ENCODE measurements at regions of chr6 and their contacts with region 1.

Region 1: GRCh38 chr6:166999145-166999883 is at the start of gene CEP43:
- DNase-seq: peak; percentile 91
- H3K4me3 Mint-ChIP-seq: peak within 1 kb of the TSS; percentile 89
- H3K27ac Mint-ChIP-seq: peak within 1 kb of the TSS; percentile 82
- H3K4me1 Mint-ChIP-seq: peaks cover 42% of the 10 kb centered on the region
- H3K27me3 Mint-ChIP-seq: no peaks in the 10 kb centered on the region
- total RNA-seq, gene CEP43: 21.5 to 22.8 TPM

Region 2: DNA sequence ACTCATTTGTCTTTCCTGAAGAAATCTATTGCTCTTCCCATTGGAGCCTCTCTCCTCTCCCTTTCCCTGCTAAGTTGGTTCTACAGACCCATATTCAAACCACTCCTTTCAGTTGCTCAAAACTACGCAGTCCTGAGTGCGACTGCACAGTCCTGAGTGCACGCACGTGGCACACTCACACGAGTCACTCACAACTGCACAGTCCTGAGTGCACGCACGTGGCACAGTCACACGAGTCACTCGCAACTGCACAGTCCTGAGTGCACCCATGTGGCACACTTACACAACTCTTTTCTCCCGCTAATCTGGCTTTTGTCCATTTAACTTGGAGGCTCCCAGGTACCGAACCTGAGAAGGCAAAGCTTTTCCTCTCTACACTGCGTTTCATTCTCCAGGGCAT is 202.7 kb before region 1 on chr6:
- CTCF ChIA-PET with region 1: no interaction called
- POLR2A ChIA-PET with region 1: no interaction called
- DNase-seq: no peak
- H3K4me3 Mint-ChIP-seq: no peak overlapping the region
- H3K27ac Mint-ChIP-seq: no peak overlapping the region
- H3K4me1 Mint-ChIP-seq: no peaks in the 10 kb centered on the region
- H3K27me3 Mint-ChIP-seq: peaks cover 7% of the 10 kb centered on the region

Region 3: DNA sequence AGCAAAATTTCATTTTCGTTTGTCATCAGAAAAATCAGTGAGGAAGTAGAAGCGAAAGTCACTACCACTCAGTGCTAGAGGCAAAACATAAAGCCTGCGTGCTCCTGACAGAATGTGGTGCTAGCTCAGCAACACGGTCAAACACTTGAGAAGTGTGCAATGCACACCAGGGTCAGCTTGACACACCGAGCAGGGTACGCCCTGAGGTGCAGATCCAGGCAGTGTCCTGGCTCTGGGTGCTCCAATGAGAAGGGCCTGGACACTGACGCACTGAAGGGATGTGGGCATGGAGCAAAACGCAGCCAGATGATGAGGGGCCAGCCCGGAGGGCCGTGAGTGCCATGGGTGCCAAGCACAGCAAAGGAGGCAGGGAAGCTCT is 48.9 kb before region 1 on chr6:
- CTCF ChIA-PET with region 1: interaction called, 4 read pairs
- POLR2A ChIA-PET with region 1: interaction called, 35 read pairs
- DNase-seq: peak; percentile 51
- H3K4me3 Mint-ChIP-seq: peak overlapping the region; percentile 67
- H3K27ac Mint-ChIP-seq: peak overlapping the region; percentile 100
- H3K4me1 Mint-ChIP-seq: peaks cover 61% of the 10 kb centered on the region
- H3K27me3 Mint-ChIP-seq: no peaks in the 10 kb centered on the region

Region 4: GRCh38 chr6:166956444-166957086 is 42.7 kb before region 1 on chr6 and contains the start of gene RNASET2:
- CTCF ChIA-PET with region 1: interaction called, 6 read pairs
- POLR2A ChIA-PET with region 1: interaction called, 35 read pairs
- DNase-seq: peak; percentile 99
- H3K4me3 Mint-ChIP-seq: peak within 1 kb of the TSS; percentile 91
- H3K27ac Mint-ChIP-seq: peak within 1 kb of the TSS; percentile 99
- H3K4me1 Mint-ChIP-seq: peaks cover 73% of the 10 kb centered on the region
- H3K27me3 Mint-ChIP-seq: no peaks in the 10 kb centered on the region
- total RNA-seq, gene RNASET2: 107 to 112 TPM

Region 5: DNA sequence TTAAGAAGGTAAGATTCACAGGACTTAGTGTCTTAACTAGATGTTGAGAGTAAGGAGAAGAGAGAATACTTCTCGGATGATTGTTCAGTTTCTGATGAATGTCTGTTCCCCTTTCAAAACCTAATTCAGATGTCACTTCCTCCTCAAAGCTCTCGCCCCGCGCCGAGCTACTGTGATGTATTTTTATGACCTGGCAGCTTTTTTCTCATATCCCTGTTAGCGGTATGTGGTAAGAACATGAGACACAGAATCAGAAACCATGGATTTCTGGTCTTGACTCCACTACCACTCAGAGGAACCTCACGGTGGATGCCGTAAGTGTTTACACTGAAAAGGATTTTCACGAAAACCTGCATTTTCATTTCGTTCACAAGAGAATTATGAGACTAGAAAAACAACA is 48.2 kb after region 1 on chr6:
- CTCF ChIA-PET with region 1: interaction called, 6 read pairs
- POLR2A ChIA-PET with region 1: interaction called, 14 read pairs
- DNase-seq: peak; percentile 70
- H3K4me3 Mint-ChIP-seq: peak overlapping the region; percentile 34
- H3K27ac Mint-ChIP-seq: peak overlapping the region; percentile 63
- H3K4me1 Mint-ChIP-seq: peaks cover 35% of the 10 kb centered on the region
- H3K27me3 Mint-ChIP-seq: no peaks in the 10 kb centered on the region

Region 6: DNA sequence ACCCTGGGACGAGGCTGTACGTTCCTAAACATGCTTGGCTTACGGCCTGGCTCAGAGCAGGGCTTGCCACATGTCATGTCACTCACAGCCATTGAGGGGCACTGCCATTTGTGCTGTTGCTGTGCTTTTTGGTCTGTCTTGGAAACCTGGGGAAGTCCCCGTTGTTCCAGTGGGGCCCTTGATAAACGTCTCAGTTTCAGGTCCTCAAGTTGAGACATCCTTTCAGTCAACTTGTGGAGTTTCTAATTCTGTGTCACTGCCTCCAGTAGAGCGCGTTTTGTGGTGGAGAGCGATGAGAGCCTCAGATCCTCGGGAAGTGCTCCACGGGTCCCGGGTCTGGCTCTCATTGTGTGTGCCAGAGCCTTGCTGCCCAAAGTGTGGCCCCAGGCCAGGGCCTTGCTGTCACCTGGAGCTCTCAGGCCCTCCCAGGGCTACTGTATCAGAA is 80.6 kb after region 1 on chr6:
- CTCF ChIA-PET with region 1: no interaction called
- POLR2A ChIA-PET with region 1: no interaction called
- DNase-seq: peak; percentile 58
- H3K4me3 Mint-ChIP-seq: no peak overlapping the region
- H3K27ac Mint-ChIP-seq: no peak overlapping the region
- H3K4me1 Mint-ChIP-seq: peaks cover 21% of the 10 kb centered on the region
- H3K27me3 Mint-ChIP-seq: peaks cover 10% of the 10 kb centered on the region

Region 7: DNA sequence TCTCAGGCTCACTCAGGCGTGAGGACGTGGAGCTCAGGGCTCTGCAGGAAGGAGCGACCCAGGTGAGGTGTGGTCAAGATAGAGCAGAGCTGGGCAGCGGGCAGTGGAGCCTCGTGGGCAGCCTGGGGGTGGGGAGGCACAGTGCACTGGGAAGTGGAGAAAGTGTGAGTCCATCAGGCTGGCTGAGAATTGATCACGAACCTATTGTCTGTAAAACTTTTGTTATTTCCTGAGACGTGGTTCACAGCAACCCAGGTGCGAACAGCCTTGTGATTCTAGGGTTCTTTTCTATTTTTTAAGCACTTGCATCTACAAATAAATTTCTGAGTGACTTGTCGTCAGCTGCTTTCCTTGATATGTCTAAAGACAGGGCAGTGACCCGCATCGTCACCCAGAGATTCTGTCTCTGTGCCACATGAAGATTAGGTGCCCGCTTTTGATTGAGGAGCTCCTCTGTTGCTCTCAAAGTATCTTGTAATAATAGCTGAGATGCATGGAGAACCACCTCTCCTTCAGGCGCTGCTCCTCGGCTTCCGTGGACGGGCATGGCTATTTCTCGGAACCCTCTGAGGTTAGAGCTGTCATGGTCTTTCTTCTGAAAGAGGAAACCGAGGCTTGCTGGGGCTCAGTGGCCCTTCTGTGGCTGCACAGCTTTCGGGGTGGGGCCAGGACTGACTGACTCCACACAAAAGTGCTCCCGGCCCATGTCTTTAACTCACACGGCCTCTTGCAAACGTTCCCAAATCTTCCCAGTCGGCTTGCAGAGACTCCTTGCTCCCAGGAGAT is 122.9 kb after region 1 on chr6:
- CTCF ChIA-PET with region 1: interaction called, 3 read pairs
- POLR2A ChIA-PET with region 1: interaction called, 20 read pairs
- DNase-seq: peak; percentile 69
- H3K4me3 Mint-ChIP-seq: peak overlapping the region; percentile 80
- H3K27ac Mint-ChIP-seq: peak overlapping the region; percentile 97
- H3K4me1 Mint-ChIP-seq: peaks cover 79% of the 10 kb centered on the region
- H3K27me3 Mint-ChIP-seq: no peaks in the 10 kb centered on the region

Region 8: DNA sequence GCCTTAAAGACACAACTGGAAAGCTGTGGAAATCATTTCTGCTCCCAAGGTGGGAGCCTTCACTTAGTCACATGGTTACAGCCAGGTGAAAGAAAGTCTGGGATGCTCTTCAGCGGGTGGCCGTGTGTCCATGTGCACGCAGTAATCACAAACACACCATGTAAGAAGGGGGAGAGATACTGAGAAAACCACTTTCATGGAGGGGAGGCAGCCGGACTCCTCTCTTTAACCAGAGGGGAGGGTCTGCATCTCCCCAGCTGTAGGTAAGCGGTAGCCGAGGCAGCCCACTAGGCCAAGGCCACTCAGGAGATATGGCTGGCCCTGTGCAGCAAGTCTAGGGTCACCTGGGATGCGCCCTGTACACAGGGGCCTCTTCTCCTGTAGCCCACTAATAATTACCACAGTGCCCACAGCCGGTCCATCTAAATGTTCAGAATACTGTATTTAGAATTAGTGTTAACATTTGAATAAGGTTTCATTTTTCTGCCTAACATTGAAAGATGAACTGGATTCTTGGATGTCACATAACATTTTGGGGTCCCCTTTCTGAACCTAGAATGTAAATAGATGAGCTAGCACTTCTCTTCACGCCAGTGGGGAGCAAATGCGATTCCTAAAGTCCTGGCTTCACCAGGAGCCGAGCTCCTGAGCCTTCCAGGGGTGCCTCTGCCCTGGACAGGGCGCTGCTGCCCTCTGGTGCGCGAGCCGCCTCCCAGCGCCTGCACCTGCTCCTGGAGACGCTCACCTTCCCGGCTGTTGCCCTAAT is 142.5 kb after region 1 on chr6:
- CTCF ChIA-PET with region 1: interaction called, 18 read pairs
- POLR2A ChIA-PET with region 1: interaction called, 5 read pairs
- DNase-seq: peak; percentile 57
- H3K4me3 Mint-ChIP-seq: no peak overlapping the region
- H3K27ac Mint-ChIP-seq: no peak overlapping the region
- H3K4me1 Mint-ChIP-seq: peaks cover 22% of the 10 kb centered on the region
- H3K27me3 Mint-ChIP-seq: no peaks in the 10 kb centered on the region

Measured in activated CD4-positive, alpha-beta memory T cell treated with anti-CD3 and anti-CD28 coated beads, Interleukin-2, amount 10 ng/mL, durations not matched to agents 7 days and 5 days (primary cell).